Heart left ventricle (tissue), 16 donors: ENCODE measurements at regions of chr6 and their contacts with region 1.

Region 1: DNA sequence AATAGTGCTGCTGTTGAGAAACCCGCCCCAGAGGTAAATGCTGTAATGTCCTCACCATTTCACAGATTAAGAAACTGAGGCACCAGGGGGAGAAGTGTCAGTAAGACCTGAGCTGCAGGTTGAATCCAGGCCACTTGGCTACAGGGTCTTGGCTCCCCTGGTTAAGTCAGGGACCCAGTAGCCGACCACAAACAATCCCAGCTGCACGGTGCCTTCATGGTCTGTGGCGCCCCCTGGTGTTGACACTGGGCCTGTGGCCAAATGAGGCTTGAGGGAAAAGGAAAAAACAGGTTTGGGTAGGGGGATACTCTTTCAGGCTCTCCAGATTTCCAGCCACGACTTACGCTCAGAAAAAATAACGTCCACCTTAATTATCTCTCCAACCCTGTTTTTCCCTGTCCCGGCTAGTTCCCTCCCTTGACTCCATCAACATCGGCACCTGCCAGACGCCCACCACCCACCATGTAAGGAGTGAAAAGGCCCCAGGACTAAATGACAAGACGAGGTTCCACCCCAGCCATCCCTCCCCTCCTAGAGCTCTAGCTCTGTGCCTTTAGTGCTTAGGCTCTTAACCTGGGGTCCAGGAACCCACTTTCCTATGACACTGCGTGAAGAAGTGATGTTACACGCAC is 47.7 kb upstream of the POLR1H start:
- DNase-seq: peak in 3 of 5 donors; percentile 41 to 81 (median 62)
- ATAC-seq: peak; percentile 55 to 70 (median 64)
- H3K4me3 ChIP-seq: no peak overlapping the region
- H3K27ac ChIP-seq: no peak overlapping the region
- H3K4me1 ChIP-seq: no peaks in the 10 kb centered on the region
- H3K27me3 ChIP-seq: peaks cover 0 to 2% (median 0%) of the 10 kb centered on the region in 9 donors
- CTCF ChIP-seq: peak; percentile 71 to 97 (median 90)
- POLR2A ChIP-seq: no peak

Region 2: GRCh38 chr6:29705389-29706231 is 307.8 kb before region 1 on chr6:
- intact Hi-C with region 1: loop called in 6 of 10 experiments (anchors 5 to 10 kb)
- DNase-seq: peak in 1 of 5 donors; percentile 34
- ATAC-seq: peak in 3 of 4 donors; percentile 64 to 70 (median 67)
- H3K4me3 ChIP-seq: no peak overlapping the region
- H3K27ac ChIP-seq: no peak overlapping the region
- H3K4me1 ChIP-seq: peaks cover 0 to 20% (median 0%) of the 10 kb centered on the region in 12 donors
- H3K27me3 ChIP-seq: peaks cover 0 to 25% (median 2%) of the 10 kb centered on the region in 9 donors
- CTCF ChIP-seq: peak in 11 of 12 donors; percentile 38 to 74 (median 65)
- POLR2A ChIP-seq: no peak

Region 3: DNA sequence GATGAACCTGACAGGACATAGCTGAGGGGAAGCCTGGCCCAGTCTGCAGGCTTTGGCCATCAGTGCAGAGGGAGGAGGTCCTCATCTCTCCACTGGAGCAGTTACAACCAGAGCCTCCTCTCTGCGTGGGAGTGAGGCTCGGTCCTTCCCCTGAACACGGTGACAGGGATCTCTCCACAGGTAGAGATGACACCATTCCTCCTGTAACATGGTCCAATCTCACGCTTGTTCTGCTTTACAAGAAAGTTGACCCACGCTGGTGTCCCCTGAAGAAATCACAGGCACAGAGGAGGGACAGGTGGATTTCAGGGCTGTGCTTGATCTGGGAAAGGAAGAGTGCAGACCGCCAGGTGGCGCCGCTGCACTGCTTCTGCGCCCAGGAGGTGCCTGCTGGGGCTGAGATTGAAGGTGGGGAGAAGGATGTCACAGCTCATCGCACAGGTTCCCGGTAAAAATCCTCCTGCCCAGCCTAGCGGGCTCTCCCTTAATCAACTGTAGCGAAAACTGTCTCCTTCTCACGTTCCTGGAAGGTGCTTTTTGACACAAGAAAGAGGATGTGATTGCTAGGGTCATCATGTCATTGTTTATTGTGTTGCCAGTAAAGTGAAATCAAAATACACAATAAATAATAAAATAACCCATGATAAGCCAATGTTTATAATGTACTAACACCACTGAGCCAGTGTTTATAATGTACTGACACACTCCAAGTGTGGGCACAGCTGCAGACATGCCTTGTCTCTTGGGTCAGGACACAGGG is 165.4 kb before region 1 on chr6:
- intact Hi-C with region 1: loop called (anchors 1 to 2 kb)
- DNase-seq: peak; percentile 58 to 88 (median 77)
- ATAC-seq: peak; percentile 75 to 93 (median 91)
- H3K4me3 ChIP-seq: no peak overlapping the region
- H3K27ac ChIP-seq: no peak overlapping the region
- H3K4me1 ChIP-seq: peaks cover 0 to 12% (median 0%) of the 10 kb centered on the region in 12 donors
- H3K27me3 ChIP-seq: peaks cover 0 to 74% (median 32%) of the 10 kb centered on the region in 9 donors
- CTCF ChIP-seq: peak; percentile 85 to 98 (median 93)
- POLR2A ChIP-seq: no peak

Region 4: GRCh38 chr6:29884261-29884660 is 129.1 kb before region 1 on chr6:
- intact Hi-C with region 1: no loop called
- DNase-seq: no peak
- ATAC-seq: no peak
- H3K4me3 ChIP-seq: no peak overlapping the region
- H3K27ac ChIP-seq: no peak overlapping the region
- H3K4me1 ChIP-seq: peaks cover 0 to 17% (median 0%) of the 10 kb centered on the region in 12 donors
- H3K27me3 ChIP-seq: no peaks in the 10 kb centered on the region
- CTCF ChIP-seq: no peak
- POLR2A ChIP-seq: no peak

Region 5: GRCh38 chr6:30130887-30131862 is 117.8 kb after region 1 on chr6:
- intact Hi-C with region 1: loop called in 1 of 10 experiments (anchors 2 kb)
- DNase-seq: peak in 4 of 5 donors; percentile 56 to 66 (median 64)
- ATAC-seq: peak in 3 of 4 donors; percentile 90 to 93 (median 91)
- H3K4me3 ChIP-seq: no peak overlapping the region
- H3K27ac ChIP-seq: no peak overlapping the region
- H3K4me1 ChIP-seq: peaks cover 0 to 17% (median 4%) of the 10 kb centered on the region in 12 donors
- H3K27me3 ChIP-seq: peaks cover 21 to 92% (median 46%) of the 10 kb centered on the region in 9 donors
- CTCF ChIP-seq: peak; percentile 84 to 99 (median 96)
- POLR2A ChIP-seq: no peak